Activated CD8-positive, alpha-beta T cell treated with anti-CD3 and anti-CD28 coated beads for 36 hours (primary cell): ENCODE measurements at regions of chr2 and their contacts with region 1.

Region 1: DNA sequence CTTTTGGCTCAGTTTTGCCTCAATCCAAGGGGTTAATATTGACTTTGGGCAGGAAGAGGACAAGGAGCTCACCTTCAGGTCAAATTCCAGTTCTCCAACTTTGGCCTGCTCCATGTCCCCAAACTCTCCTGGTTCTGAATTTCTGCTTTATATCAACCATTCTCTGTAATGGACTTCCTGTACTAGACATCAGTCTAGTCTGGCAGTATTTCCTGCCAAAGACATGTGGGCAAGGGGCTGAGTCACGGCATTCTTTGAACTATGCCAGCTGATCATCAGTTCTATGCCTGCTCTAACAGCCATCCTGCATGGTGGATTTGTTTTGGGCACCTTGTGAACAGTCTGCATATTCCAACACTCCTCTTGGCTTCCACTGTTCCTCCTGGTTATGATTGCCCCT is 199.4 kb downstream of the ZEB2 start:
- DNase-seq: peak; percentile 81
- ATAC-seq: peak; percentile 57
- H3K4me3 Mint-ChIP-seq: peak overlapping the region; percentile 22
- H3K27ac Mint-ChIP-seq: peak overlapping the region; percentile 84
- H3K4me1 Mint-ChIP-seq: peaks cover 55% of the 10 kb centered on the region
- H3K27me3 Mint-ChIP-seq: no peaks in the 10 kb centered on the region
- CTCF ChIP-seq: no peak

Region 2: GRCh38 chr2:144111437-144111836 is 209.1 kb before region 1 on chr2:
- CTCF ChIA-PET with region 1: no interaction called
- POLR2A ChIA-PET with region 1: no interaction called
- intact Hi-C with region 1: no loop called
- DNase-seq: no peak
- ATAC-seq: no peak
- H3K4me3 Mint-ChIP-seq: no peak overlapping the region
- H3K27ac Mint-ChIP-seq: no peak overlapping the region
- H3K4me1 Mint-ChIP-seq: peaks cover 19% of the 10 kb centered on the region
- H3K27me3 Mint-ChIP-seq: no peaks in the 10 kb centered on the region
- CTCF ChIP-seq: no peak

Region 3: GRCh38 chr2:144183727-144184126 is 136.8 kb before region 1 on chr2:
- CTCF ChIA-PET with region 1: interaction called, 3 read pairs
- POLR2A ChIA-PET with region 1: no interaction called
- intact Hi-C with region 1: loop called (anchors 5 kb)
- DNase-seq: peak; percentile 92
- ATAC-seq: peak; percentile 99
- H3K4me3 Mint-ChIP-seq: peak overlapping the region; percentile 32
- H3K27ac Mint-ChIP-seq: peak overlapping the region; percentile 90
- H3K4me1 Mint-ChIP-seq: peaks cover 59% of the 10 kb centered on the region
- H3K27me3 Mint-ChIP-seq: no peaks in the 10 kb centered on the region
- CTCF ChIP-seq: no peak

Region 4: GRCh38 chr2:144215701-144216675 is 104.5 kb before region 1 on chr2:
- CTCF ChIA-PET with region 1: no interaction called
- POLR2A ChIA-PET with region 1: no interaction called
- intact Hi-C with region 1: no loop called
- DNase-seq: no peak
- ATAC-seq: peak; percentile 67
- H3K4me3 Mint-ChIP-seq: peak overlapping the region; percentile 49
- H3K27ac Mint-ChIP-seq: peak overlapping the region; percentile 97
- H3K4me1 Mint-ChIP-seq: peaks cover 63% of the 10 kb centered on the region
- H3K27me3 Mint-ChIP-seq: no peaks in the 10 kb centered on the region
- CTCF ChIP-seq: no peak

Region 5: DNA sequence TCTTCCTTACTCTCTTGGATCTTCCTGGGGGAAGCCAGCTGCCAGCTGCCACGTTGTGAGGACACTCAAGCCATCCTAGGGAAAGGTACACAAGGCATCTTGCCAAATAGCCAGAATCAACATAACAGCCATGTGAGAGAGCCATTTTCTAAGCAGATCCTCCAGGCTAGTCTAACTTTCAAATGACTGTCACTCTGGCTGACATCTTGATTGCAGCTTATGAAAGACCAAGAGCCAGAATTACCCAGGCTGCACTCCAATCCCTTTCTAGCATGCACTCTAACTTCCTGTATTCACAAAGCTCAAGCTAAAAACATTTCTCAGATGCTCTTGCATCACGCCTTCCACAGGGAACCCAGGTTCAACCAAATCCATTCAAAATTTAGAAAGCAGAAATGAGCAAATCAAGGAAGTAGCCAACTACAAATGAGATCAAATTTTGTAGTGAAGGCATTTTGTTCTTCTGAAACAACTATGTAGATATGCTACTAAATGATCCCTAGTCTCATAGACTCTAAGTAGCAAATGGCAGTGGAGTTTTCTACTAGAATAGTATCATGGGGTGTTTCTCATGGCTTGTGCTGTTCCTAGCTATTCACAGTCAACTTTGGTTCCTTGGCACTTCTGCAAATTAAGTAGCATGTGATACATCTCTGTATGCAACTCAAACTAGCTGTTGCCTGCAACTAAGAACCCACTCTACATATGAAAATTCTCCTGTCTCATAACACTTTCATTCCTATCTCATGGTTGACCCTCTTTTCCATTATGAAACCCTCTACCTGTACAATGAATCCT is 82.5 kb before region 1 on chr2:
- CTCF ChIA-PET with region 1: no interaction called
- POLR2A ChIA-PET with region 1: no interaction called
- intact Hi-C with region 1: loop called (anchors 5 kb)
- DNase-seq: no peak
- ATAC-seq: no peak
- H3K4me3 Mint-ChIP-seq: no peak overlapping the region
- H3K27ac Mint-ChIP-seq: peak overlapping the region; percentile 53
- H3K4me1 Mint-ChIP-seq: peaks cover 79% of the 10 kb centered on the region
- H3K27me3 Mint-ChIP-seq: no peaks in the 10 kb centered on the region
- CTCF ChIP-seq: no peak

Region 6: GRCh38 chr2:144332356-144333142 is 12.1 kb after region 1 on chr2:
- CTCF ChIA-PET with region 1: interaction called, 7 read pairs
- POLR2A ChIA-PET with region 1: interaction called, 15 read pairs
- intact Hi-C with region 1: no loop called
- DNase-seq: peak; percentile 85
- ATAC-seq: peak; percentile 87
- H3K4me3 Mint-ChIP-seq: peak overlapping the region; percentile 95
- H3K27ac Mint-ChIP-seq: peak overlapping the region; percentile 91
- H3K4me1 Mint-ChIP-seq: peaks cover 40% of the 10 kb centered on the region
- H3K27me3 Mint-ChIP-seq: no peaks in the 10 kb centered on the region
- CTCF ChIP-seq: no peak

Region 7: DNA sequence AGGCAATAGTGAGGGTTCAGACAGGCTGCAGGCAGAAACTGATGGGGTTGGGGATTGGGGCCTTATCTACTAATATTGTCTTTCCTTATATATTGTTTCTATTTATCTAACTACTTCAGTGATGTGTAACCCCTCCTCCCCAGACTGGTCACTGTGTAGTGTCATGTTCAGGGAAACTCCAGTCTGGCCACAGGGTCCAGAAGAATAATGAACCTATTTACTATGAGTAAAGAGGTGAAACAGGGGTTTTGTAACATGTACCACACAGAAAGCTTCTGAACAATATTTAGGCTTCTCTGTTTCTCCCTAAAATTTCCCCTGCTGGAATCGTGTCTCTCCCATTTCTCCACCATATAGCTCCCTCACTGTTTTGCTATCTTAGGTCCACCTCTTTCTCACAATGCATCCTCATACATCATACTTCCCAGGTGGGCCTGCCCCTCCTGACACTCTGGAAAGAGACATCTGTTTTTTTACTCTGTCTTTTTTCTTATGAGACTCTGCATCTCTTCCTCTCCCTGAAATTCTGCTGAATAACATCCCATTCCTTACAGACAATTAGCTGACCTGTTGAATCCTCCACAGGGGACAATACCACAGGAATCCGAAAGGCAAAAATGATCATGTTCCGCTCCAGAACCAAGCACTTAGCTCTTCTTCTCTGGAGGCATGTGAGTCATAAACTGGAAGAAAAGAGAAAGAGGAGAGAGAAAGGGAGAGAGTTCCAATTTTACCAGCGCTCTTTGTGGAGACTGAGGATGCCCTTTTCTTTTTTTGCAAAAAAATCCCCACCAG is 44.6 kb after region 1 on chr2:
- CTCF ChIA-PET with region 1: no interaction called
- POLR2A ChIA-PET with region 1: no interaction called
- intact Hi-C with region 1: no loop called
- DNase-seq: no peak
- ATAC-seq: no peak
- H3K4me3 Mint-ChIP-seq: no peak overlapping the region
- H3K27ac Mint-ChIP-seq: no peak overlapping the region
- H3K4me1 Mint-ChIP-seq: peaks cover 4% of the 10 kb centered on the region
- H3K27me3 Mint-ChIP-seq: no peaks in the 10 kb centered on the region
- CTCF ChIP-seq: no peak

Region 8: GRCh38 chr2:144449028-144449406 is 128.5 kb after region 1 on chr2:
- CTCF ChIA-PET with region 1: no interaction called
- POLR2A ChIA-PET with region 1: no interaction called
- intact Hi-C with region 1: no loop called
- DNase-seq: peak; percentile 10
- ATAC-seq: peak; percentile 30
- H3K4me3 Mint-ChIP-seq: peak overlapping the region; percentile 22
- H3K27ac Mint-ChIP-seq: peak overlapping the region; percentile 38
- H3K4me1 Mint-ChIP-seq: peaks cover 43% of the 10 kb centered on the region
- H3K27me3 Mint-ChIP-seq: no peaks in the 10 kb centered on the region
- CTCF ChIP-seq: no peak